ENCODE measurements at regions of chr3 and their contacts with region 1.

Region 1: DNA sequence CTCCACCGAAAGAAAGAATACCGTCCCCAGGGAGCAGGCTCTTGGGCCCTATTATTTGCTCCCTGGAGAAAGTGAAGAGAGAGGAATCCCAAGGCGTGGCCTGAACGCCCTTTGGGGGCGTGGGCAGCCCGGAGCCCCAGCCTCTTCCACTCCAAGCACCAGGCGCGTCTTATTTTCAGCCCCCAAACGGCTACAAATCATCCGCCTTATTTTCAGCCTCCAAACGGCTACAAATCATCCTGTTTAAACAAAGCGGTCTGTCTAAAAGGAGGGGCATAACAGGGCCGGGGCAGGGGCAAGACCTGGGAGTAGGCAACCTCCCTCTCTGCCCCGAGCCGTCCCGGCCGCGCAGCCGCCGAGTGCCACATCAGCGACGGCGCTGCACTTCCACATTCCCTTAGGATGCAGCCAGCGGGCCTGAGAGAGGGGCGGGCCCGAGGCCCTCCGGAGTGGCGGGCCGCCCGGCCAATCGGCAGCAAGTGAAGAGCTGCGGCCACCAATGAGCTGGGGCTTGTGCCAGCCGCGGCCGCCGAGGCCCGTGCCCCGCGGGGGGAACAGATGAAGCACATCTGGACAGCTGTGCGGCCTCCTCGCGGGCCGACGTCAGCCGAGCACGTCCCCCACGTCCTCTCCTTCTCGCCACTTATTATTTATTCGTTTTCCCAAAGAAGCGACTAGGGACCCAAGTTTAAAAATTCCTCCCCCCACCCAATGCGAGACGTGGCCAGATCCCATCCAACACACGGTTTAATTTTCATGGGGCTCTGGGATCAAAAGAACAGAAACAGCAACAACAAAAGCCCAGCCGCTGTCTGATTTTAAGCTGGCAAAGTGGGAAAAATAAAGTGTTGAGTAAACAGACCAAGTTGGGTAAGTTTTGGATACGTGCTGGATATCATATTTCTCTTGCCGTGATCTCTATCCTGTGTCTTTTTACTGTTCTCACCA is at the start of gene TMEM45A:
- DNase-seq: peak; percentile 85 to 98
- H3K4me3 ChIP-seq: peak within 1 kb of the TSS; percentile 61 to 73
- H3K27ac ChIP-seq: peak within 1 kb of the TSS; percentile 85 to 89
- H3K4me1 ChIP-seq: peaks cover 0 to 7% of the 10 kb centered on the region in 2 donors
- H3K27me3 ChIP-seq: no peaks in the 10 kb centered on the region
- CTCF ChIP-seq: no peak
- total RNA-seq, gene TMEM45A: 30.9 TPM

Region 2: GRCh38 chr3:99920481-99921376 is 571.6 kb before region 1 on chr3:
- intact Hi-C with region 1: no loop called
- DNase-seq: peak in 1 of 2 donors; percentile 85
- H3K4me3 ChIP-seq: no peak overlapping the region
- H3K27ac ChIP-seq: peak overlapping the region; percentile 78 to 83
- H3K4me1 ChIP-seq: peaks cover 0 to 25% of the 10 kb centered on the region in 2 donors
- H3K27me3 ChIP-seq: no peaks in the 10 kb centered on the region
- CTCF ChIP-seq: no peak

Region 3: DNA sequence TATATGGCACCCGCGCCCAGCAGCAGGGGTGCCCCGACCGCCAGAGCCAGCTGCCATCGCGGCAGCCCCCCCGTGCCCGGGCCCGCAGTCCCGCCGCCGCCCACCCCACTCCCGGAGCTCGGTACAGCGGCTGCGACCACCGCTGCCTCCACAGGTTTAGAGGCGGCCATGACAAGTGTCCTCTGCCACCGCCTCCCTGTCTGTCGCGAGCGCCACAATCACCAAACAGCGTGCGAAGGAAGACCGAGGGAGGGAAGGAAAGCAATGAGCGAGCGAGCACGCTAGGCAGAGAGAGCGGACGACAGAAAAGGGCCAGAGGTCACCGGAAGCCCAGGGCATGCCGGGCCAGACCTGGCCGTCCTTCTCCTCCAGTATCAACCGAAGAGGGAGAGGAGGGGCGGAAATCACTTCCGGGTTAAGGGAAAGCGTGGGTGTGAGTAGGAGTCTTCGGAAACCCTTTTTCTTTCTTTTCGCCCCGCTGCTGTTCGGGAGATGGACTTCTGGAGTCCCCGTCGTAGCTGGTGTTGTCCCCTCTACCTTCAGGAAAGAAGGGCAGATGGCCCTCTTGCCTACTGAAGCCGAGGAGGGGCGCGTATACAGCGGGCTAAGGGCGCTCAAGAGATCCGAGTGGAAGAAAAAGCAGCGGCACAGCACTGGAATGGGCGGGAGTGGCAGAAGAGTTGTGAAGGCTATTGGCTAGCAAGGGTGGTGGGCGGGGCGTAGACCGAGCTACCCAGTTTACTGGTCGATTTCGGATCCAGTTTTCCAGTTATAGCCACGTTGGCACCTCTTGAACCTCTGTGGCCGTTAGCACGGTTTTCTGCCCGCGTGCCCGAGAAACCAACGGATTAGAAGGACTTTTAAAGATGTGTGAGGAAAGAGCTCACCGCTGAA is 91.3 kb before region 1 on chr3 and contains the starts of genes LNP1 and TOMM70:
- intact Hi-C with region 1: loop called (anchors 1 kb)
- DNase-seq: peak; percentile 92 to 99
- H3K4me3 ChIP-seq: peak within 1 kb of the TSS; percentile 89 to 92
- H3K27ac ChIP-seq: peak within 1 kb of the TSS; percentile 90 to 91
- H3K4me1 ChIP-seq: peaks cover 10 to 30% of the 10 kb centered on the region in 2 donors
- H3K27me3 ChIP-seq: no peaks in the 10 kb centered on the region
- CTCF ChIP-seq: no peak
- total RNA-seq, gene LNP1: 1.3 TPM
- total RNA-seq, gene TOMM70: 16.4 TPM

Region 4: DNA sequence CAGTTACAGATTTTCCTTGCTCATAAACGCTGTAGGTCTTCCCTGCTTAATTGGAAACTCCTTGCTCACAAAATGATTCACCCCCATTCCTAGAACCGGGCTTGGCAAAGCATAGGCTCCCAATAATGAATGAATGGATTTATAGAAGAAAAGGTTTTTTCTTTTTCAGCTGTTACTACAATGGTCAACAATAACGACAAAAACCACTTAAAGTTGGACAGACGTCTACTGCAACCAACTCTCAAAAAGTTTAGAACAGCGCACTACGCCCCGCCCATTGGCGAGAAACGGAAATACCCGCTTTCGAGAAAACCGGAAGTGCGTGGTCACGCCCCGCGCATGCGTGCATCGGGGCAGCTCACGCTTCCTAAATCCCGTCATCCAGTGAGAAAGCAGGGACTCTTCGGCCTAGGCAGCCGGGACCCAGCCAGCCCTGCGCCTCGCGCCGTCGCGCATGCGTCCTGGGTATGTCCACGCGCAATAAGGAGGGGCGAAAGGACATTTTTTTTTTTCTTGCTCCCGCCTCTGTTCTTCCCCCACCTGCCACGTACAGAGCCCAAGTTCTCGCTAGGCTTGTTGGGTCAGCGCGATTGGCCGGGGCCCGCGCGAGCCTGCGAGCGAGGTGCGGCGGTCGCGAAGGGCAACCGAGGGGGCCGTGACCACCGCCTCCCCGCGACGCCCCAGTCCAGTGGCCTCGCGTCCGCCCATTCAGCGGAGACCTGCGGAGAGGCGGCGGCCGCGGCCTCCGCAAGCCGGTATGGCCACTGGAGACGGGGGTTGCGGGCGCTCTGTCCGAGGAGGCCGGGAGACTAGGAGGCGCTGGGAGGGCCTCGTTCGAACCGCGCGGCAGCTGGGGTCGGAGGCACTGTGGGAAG is 216.9 kb after region 1 on chr3 and contains the start of gene TFG:
- intact Hi-C with region 1: loop called (anchors 1 kb)
- DNase-seq: peak; percentile 93 to 99
- H3K4me3 ChIP-seq: peak within 1 kb of the TSS; percentile 82 to 84
- H3K27ac ChIP-seq: peak within 1 kb of the TSS; percentile 95 to 97
- H3K4me1 ChIP-seq: peaks cover 0 to 22% of the 10 kb centered on the region in 2 donors
- H3K27me3 ChIP-seq: no peaks in the 10 kb centered on the region
- CTCF ChIP-seq: no peak
- total RNA-seq, gene TFG: 64.9 TPM